ENCODE measurements at regions of chr19 and their contacts with region 1.

Region 1: DNA sequence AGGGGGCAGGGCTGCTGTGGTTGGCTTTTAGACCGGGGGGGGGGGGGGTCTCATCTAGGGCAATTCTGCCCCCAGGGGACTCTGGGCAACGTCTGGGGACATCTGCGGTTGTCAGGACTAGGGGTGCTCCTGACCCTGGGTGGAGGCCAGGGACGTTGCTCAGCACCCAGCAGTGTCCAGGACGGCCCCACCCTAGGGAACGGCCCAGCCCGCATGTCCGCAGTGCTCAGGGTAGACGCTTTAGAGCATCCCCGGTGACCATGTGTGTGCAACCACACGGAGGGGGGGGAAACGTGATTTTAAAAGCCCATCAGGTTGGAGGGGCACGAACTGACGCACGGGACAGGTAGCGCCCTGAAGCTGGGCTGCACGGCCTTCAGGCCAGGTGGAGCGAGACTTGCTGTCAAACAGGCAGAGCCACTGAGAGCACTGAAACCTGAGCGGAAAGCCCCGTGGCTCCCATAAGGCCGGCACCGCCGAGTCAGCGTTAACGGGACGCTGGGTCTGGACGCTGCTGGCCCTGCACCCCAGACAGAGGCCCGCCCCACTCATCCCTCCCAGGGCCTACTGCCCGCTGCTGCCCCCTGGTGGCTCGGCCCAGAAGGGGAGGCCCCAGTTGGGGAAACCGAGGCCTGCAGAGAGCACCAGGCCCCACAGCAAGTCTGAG is 8.3 kb downstream of the CACTIN start:
- DNase-seq: peak; percentile 68 to 82 (median 77)
- H3K4me3 ChIP-seq: no peak overlapping the region
- H3K27ac ChIP-seq: no peak overlapping the region
- H3K4me1 ChIP-seq: peaks cover 1% of the 10 kb centered on the region
- H3K27me3 ChIP-seq: no peaks in the 10 kb centered on the region
- CTCF ChIP-seq: peak; percentile 75 to 89 (median 88)
- EP300 ChIP-seq: no peak
- POLR2A ChIP-seq: no peak

Region 2: DNA sequence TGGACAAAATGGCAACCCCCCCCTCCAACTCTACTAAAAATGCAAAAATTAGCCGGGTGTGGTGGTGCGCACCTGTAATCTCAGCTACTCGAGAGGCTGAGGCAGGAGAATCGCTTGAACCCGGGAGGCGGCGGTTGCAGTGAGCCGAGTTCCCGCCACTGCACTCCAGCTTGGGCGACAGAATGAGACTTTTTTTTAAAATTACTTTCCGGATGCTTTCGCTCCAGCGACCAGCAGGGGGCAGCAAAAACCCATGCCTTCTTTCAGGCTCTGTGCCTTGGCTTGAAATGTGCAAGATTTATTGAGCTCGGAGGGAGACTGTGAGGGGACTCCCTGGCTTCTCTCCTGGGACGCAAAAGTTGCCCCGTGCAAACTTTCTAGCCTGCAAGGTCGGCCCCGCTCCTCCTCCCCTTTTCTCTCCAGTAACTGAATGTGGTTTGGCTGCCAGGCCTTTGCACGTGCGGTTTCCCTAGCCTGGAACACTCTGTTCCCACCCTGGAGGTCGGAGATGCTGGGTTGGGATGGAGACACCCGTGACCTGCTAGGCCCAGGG is 313.3 kb before region 1 on chr19:
- intact Hi-C with region 1: loop called in 2 of 4 experiments (anchors 5 kb)
- DNase-seq: peak; percentile 67 to 86 (median 82)
- H3K4me3 ChIP-seq: no peak overlapping the region
- H3K27ac ChIP-seq: no peak overlapping the region
- H3K4me1 ChIP-seq: peaks cover 1% of the 10 kb centered on the region
- H3K27me3 ChIP-seq: no peaks in the 10 kb centered on the region
- CTCF ChIP-seq: peak; percentile 87 to 91 (median 87)
- EP300 ChIP-seq: no peak
- POLR2A ChIP-seq: no peak

Region 3: DNA sequence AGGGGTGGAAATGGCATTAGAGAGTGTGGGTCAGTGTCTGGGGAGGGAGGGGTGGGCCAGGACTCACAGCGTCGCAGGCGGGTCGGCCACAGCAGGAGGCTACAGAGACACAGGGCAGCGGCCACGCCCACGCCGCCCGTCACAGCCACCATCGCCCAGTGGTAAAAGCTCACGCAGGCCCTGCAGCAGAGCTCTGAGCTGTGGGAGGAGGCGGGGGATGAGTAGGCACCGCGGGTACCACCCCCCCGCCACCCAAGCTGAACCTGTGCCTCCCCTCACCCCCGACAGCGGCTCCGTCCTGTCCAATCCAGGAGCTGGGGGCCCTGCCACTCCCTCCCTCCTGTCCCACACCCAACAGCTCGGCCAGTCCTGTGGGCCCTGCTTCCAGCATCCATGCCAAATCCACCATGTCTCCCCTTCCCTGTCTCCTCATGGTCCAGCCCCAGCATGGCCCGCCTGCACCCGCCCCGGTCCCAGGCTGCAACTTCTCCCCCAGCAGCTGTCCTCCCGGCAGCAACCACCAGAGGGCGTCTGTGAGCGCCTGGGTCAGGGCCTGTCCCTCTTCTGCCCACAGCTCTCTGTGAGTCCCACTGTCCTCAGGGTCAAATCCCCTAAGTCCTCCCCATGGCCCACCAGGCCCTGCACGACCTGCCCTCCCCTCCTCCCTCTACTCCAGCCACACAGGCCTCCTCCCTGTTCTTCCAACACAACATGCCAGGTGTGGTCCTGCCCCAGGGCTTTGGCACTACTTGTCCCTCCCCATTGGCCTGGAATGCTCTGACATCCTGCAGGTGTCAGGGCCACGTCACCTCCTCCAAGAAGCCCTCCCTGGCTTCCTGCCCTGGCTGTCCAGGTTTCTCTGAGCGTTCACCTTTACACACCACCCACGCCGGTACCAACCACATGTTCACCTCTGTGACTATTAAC is 73.3 kb before region 1 on chr19:
- intact Hi-C with region 1: loop called in 2 of 4 experiments (anchors 5 to 10 kb)
- DNase-seq: peak; percentile 49 to 82 (median 69)
- H3K4me3 ChIP-seq: no peak overlapping the region
- H3K27ac ChIP-seq: no peak overlapping the region
- H3K4me1 ChIP-seq: no peaks in the 10 kb centered on the region
- H3K27me3 ChIP-seq: no peaks in the 10 kb centered on the region
- CTCF ChIP-seq: peak; percentile 66 to 81 (median 74)
- EP300 ChIP-seq: no peak
- POLR2A ChIP-seq: no peak

Measured in ovary (tissue), 10 donors.